PC-9 (cell line): ENCODE measurements at regions of chr14 and their contacts with region 1.

Region 1: DNA sequence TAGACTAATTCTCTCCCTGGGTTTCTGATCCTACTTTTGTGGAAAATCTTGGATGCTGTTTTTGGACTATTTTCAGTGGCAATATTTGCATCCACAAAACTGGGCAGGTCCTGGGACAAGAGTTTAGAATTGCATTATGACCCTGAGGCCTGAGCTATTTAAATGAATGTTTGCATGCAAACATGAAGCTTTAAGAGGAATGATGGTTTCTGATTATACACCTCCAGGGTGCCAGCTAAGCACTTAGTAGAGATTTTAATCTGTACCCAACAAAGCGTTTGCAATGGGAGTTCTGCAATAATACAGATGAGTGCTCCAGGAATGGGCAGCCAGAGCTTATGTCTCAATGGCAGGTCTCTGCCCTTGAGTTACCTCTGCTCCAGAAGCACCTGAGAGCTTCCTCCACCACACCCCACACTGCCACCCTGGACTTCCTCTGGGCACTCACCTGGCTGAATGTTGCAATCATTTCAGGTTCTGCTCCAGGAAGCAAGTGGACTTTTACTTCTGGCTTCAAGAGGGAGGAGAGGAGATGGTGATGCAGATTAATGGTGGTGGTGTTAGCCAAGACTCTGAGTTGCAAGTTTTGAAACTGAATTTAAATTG is 6.0 kb upstream of the SPTLC2 start:
- DNase-seq: peak; percentile 95 to 100
- H3K4me3 ChIP-seq: peak overlapping the region; percentile 6; the same call in 1 of the 2 replicates
- H3K27ac ChIP-seq: peak overlapping the region; percentile 73
- H3K4me1 ChIP-seq: peaks cover 41% of the 10 kb centered on the region
- H3K27me3 ChIP-seq: no peaks in the 10 kb centered on the region
- CTCF ChIP-seq: no peak

Region 2: DNA sequence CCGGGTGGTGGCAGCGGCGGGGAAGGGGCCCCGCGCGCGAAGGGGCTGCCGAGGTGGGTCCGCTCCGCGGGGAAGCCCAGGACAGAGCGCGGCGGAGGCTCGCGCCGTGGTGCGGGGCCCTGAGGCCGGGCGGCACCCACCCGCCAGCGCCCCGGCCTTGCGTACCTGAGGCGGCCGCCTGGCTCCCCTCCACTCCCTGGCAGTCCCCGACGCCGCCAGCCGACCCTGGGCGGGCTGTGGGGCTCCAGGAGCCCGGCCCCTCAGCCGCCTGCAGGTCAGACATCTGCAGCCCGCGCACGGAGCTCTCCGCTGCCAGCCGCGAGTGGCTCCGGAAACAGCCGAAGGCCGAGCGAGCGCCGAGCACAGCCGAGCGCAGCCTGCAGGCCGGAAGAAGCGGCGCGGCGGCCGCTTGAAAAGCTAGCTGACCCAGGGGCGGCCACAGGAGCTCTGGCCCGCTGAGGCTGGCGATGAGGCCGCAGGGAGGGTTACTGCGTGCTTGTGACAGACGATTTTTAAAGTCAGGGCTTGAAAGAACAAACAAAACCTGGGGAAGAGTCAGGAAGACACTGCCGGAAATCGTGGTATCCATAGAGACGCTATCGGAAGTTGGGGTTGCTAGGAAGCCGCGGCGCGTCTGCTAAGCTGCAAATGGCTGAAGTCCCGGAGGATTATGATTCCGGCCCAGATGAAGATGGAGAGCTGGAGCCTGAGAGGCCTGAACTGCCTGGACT is 245.5 kb before region 1 on chr14 and contains the starts of genes SAMD15 and TMED8:
- CTCF ChIA-PET with region 1: no interaction called
- POLR2A ChIA-PET with region 1: no interaction called
- intact Hi-C with region 1: no loop called
- DNase-seq: peak; percentile 83 to 97
- H3K4me3 ChIP-seq: peak within 1 kb of the TSS; percentile 82
- H3K27ac ChIP-seq: peak within 1 kb of the TSS; percentile 40
- H3K4me1 ChIP-seq: peaks cover 19% of the 10 kb centered on the region
- H3K27me3 ChIP-seq: no peaks in the 10 kb centered on the region
- CTCF ChIP-seq: peak; percentile 46; the same call in 1 of the 2 replicates
- total RNA-seq, gene SAMD15: 4.8 and 7.8 TPM in 2 replicates
- total RNA-seq, gene TMED8: 32.1 and 42.6 TPM in 2 replicates

Region 3: GRCh38 chr14:77641534-77642341 is 19.3 kb after region 1 on chr14:
- CTCF ChIA-PET with region 1: interaction called, 6 read pairs
- POLR2A ChIA-PET with region 1: interaction called, 10 read pairs
- intact Hi-C with region 1: loop called (anchors 2 kb)
- DNase-seq: peak; percentile 32 to 77
- H3K4me3 ChIP-seq: no peak overlapping the region
- H3K27ac ChIP-seq: no peak overlapping the region
- H3K4me1 ChIP-seq: peaks cover 38% of the 10 kb centered on the region
- H3K27me3 ChIP-seq: no peaks in the 10 kb centered on the region
- CTCF ChIP-seq: no peak